GM10248 (cell line): ENCODE measurements at regions of chr5 and their contacts with region 1.

Region 1: GRCh38 chr5:177357459-177358351 is at the start of gene RGS14:
- DNase-seq: peak; percentile 92
- CTCF ChIP-seq: no peak

Region 2: GRCh38 chr5:177176175-177176711 is 181.5 kb before region 1 on chr5:
- CTCF ChIA-PET with region 1: no interaction called
- POLR2A ChIA-PET with region 1: no interaction called
- DNase-seq: no peak
- CTCF ChIP-seq: no peak

Region 3: GRCh38 chr5:177189416-177189815 is 168.3 kb before region 1 on chr5:
- CTCF ChIA-PET with region 1: no interaction called
- POLR2A ChIA-PET with region 1: no interaction called
- DNase-seq: no peak
- CTCF ChIP-seq: no peak

Region 4: DNA sequence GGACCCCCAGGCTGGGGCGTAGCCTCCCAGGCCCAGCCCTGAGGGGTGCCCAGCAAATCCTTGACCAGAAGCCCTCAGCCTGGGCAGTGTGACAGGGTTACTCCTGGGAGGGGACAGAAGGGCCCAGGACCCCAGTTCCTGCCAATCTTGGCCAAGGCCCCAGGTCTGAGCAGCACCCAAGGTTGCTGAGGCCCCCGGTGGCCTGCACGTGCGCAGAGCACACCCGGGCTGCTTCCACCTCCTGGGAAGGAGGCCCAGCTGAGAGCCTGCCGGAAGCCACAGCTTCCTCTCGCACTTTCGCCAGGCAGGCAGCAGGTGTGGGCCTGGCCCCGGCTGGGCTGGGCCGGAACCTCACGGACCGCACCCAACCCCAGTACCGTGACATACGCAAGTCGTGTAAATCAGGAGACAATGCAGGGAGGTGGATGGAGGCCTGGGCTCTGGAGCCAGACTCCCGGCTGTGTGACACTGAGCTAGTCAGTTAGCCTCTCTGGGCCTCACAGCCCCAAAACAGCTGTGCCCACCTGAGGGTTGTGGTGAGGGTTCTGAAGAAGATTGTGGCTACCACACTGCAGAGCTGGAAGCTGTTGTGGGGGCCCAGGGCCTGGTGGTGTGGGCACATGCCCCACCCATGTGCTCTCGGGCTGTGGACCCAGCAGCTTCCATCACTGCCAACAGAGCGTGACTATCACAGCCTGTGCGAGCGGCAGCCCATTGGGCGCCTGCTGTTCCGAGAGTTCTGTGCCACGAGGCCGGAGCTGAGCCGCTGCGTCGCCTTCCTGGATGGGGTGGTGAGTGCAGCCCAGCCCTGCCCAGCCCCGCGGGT is 73.8 kb after region 1 on chr5:
- CTCF ChIA-PET with region 1: interaction called, 3 read pairs
- POLR2A ChIA-PET with region 1: interaction called, 12 read pairs
- DNase-seq: peak; percentile 59
- CTCF ChIP-seq: no peak